ENCODE measurements at regions of chr3 and their contacts with region 1.

Region 1: DNA sequence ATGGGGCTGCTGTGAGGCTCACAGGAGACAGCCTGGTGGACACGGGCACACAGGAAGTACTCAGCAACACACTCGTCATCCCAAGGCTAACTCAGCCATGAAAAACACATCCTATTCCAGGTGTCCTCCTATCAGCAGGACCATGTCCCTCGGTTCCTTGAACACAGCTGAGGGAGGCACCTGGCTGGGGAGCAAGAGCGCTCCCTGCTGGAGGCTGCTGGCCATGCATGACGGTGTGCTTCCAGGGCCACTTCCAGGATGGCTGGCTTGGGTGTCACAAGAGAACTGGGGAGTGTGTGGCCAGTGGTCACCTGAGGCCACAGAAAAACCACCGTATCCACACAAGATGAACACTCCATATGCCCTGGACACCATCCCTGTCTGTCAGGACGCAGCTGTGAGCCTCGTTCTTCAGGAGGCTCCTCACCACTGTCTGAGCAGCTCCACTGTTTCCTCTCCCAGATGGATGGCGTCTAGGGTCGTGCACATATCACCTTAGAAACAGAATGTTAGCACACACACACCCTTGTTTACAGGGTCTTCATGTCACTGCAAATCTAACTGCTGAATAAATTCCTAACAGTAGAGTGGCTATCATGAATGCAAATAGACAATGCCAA is 31.0 kb downstream of the POC1A start:
- DNase-seq: peak; percentile 83
- ATAC-seq: peak; percentile 89 to 92
- H3K4me3 ChIP-seq: no peak overlapping the region
- H3K27ac ChIP-seq: peak overlapping the region; percentile 76
- H3K4me1 ChIP-seq: peaks cover 39% of the 10 kb centered on the region
- H3K27me3 ChIP-seq: no peaks in the 10 kb centered on the region
- CTCF ChIP-seq: peak; percentile 98

Region 2: DNA sequence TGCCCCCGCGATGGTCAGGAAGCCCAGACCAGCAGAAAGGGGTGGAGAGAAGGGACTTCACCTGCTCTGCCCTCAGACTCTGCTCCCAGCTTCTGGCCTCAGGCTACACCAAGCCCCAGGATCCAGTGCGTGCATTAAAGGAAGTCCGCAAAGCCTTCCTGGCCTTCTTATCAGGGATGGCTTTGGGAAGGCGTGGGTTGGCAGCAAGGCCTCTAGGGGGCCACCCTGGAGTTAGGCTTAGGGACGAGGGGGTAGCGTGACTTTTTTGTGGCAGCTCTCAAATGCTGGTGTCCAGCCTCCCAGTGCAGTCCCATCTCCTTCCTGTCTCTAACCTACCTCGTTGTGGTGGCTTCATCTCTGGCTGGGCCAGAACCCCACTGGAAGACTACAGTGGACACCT is 108.6 kb before region 1 on chr3:
- intact Hi-C with region 1: loop called (anchors 10 kb)
- DNase-seq: no peak
- ATAC-seq: no peak
- H3K4me3 ChIP-seq: no peak overlapping the region
- H3K27ac ChIP-seq: no peak overlapping the region
- H3K4me1 ChIP-seq: peaks cover 12% of the 10 kb centered on the region
- H3K27me3 ChIP-seq: no peaks in the 10 kb centered on the region
- CTCF ChIP-seq: peak; percentile 28